ENCODE measurements at regions of chr15 and their contacts with region 1.

Region 1: DNA sequence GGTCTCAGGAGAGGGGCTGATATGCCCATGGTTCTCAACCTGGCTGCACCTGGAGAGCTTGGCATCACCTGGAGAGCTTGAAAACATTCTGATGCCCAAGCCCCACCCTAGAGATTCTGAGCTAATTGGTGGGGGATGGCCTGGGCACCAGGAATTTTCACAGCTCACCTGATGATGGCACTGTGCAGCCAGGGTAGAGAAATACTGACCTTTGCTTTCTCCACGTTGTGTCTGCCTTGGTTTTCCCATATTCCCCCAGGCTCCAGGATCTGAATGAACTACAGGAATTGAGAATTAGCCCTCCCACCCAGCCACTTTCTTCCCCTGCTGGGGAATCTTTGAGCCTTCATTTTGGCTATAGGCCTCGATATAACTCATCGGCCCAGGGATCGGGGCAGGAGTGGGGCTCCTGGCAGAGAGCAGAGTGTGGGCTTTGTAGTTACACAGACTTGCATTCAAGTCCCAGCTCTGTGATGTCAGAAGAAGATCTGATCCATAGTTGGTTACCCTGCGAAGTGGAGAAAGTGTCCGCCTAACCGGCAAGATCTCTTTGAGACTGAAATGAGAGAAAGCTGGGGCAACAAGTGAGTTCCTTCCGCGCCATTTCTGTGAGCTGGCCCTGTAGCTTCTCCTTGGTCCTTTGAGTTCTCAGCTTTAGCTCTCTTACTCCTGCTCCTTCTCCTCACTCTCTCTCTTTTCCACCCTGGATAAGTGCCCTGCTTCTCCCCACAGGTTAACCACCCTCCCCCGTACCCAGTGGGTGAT is 33.1 kb upstream of the UBE2Q2 start:
- DNase-seq: no peak
- ATAC-seq: peak in 2 of 4 donors; percentile 61 to 65
- H3K4me3 ChIP-seq: no peak overlapping the region
- H3K27ac ChIP-seq: no peak overlapping the region
- H3K4me1 ChIP-seq: no peaks in the 10 kb centered on the region
- H3K27me3 ChIP-seq: no peaks in the 10 kb centered on the region
- CTCF ChIP-seq: peak in 10 of 12 donors; percentile 14 to 53 (median 32)
- POLR2A ChIP-seq: no peak

Region 2: GRCh38 chr15:75785771-75786574 is 24.2 kb before region 1 on chr15:
- intact Hi-C with region 1: no loop called
- DNase-seq: no peak
- ATAC-seq: no peak
- H3K4me3 ChIP-seq: no peak overlapping the region
- H3K27ac ChIP-seq: no peak overlapping the region
- H3K4me1 ChIP-seq: no peaks in the 10 kb centered on the region
- H3K27me3 ChIP-seq: peaks cover 0 to 16% (median 0%) of the 10 kb centered on the region in 9 donors
- CTCF ChIP-seq: peak in 3 of 12 donors; percentile 8 to 32 (median 29)
- POLR2A ChIP-seq: no peak

Region 3: DNA sequence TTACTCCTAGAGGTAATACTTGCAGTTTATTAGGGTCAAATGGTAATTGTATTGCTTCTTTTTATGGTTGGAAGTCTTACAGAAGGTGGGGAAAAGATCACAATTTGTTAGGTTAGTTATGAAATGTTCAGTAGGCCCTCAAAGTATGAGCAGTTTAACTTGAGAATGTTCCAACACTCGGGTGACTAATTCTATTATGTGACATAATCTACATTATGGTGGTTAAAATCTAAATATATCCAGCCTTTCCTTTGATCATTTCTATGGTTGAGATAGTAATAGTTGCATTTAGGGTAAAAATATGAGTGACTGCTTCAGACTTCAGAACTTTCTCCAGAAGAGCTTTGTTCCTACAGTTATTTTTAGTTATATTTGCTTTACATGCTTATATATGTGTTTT is 73.9 kb after region 1 on chr15:
- intact Hi-C with region 1: no loop called
- DNase-seq: no peak
- ATAC-seq: no peak
- H3K4me3 ChIP-seq: no peak overlapping the region
- H3K27ac ChIP-seq: no peak overlapping the region
- H3K4me1 ChIP-seq: no peaks in the 10 kb centered on the region
- H3K27me3 ChIP-seq: no peaks in the 10 kb centered on the region
- CTCF ChIP-seq: no peak
- POLR2A ChIP-seq: no peak

Region 4: GRCh38 chr15:75921729-75922703 is 111.8 kb after region 1 on chr15:
- intact Hi-C with region 1: loop called in 3 of 10 experiments (anchors 10 kb)
- DNase-seq: peak in 3 of 5 donors; percentile 10 to 34 (median 34)
- ATAC-seq: peak; percentile 66 to 78 (median 70)
- H3K4me3 ChIP-seq: no peak overlapping the region
- H3K27ac ChIP-seq: no peak overlapping the region
- H3K4me1 ChIP-seq: peaks cover 0 to 40% (median 12%) of the 10 kb centered on the region in 12 donors
- H3K27me3 ChIP-seq: no peaks in the 10 kb centered on the region
- CTCF ChIP-seq: peak in 10 of 12 donors; percentile 18 to 60 (median 44)
- POLR2A ChIP-seq: no peak